Heart right ventricle (tissue), 16 donors: ENCODE measurements at regions of chr11 and their contacts with region 1.

Region 1: GRCh38 chr11:108654994-108655631 is 9.8 kb upstream of the DDX10 start:
- DNase-seq: peak in 1 of 2 donors; percentile 27
- ATAC-seq: peak in 2 of 8 donors; percentile 33 to 52
- H3K4me3 ChIP-seq: no peak overlapping the region
- H3K27ac ChIP-seq: no peak overlapping the region
- H3K4me1 ChIP-seq: no peaks in the 10 kb centered on the region
- H3K27me3 ChIP-seq: peaks cover 0 to 10% (median 0%) of the 10 kb centered on the region in 7 donors
- CTCF ChIP-seq: peak in 8 of 9 donors; percentile 36 to 68 (median 58)

Region 2: GRCh38 chr11:107999759-108000455 is 655.2 kb before region 1 on chr11:
- intact Hi-C with region 1: loop called in 4 of 10 experiments (anchors 5 to 10 kb)
- DNase-seq: no peak
- ATAC-seq: peak in 1 of 8 donors; percentile 68
- H3K4me3 ChIP-seq: no peak overlapping the region
- H3K27ac ChIP-seq: no peak overlapping the region
- H3K4me1 ChIP-seq: no peaks in the 10 kb centered on the region
- H3K27me3 ChIP-seq: peaks cover 0 to 4% (median 0%) of the 10 kb centered on the region in 7 donors
- CTCF ChIP-seq: peak in 7 of 9 donors; percentile 21 to 48 (median 34)

Region 3: DNA sequence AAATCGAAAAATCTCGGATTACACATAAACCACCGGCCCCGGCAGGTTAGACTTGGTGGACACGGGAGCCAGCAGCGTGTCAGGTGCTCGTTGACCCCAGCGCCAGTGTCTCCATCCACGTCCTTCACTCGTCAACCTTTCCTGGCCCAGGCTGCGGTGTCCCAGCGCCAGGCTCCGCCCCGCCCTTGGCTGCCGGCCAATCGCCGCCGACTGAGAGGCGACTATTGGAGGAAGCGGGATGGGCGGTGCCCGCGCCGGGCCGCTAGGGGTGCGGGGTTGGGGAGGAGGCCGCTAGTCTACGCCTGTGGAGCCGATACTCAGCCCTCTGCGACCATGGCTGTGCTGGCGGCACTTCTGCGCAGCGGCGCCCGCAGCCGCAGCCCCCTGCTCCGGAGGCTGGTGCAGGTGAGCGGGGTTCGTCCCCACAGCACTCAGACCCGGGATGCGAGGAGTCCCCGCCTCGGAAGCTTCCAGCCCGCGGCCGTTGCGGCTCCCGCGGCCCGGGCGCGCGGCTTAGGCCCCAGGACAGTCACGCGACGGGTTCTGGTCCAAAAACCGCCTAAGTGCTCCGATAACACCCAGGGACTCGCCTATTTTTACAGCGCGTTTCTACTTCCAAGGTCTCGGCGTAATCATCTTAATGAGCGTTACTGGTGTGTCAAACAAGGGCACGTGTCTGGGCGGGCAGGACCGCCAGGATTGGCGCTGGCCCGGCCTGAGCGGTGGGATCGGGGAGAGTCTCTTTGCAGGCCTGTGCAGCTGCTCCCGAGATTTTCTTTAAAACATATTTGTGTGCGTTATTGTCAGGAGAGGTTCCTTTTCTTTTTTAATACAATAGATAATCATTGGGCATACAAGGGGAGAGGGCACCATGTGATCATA is 533.6 kb before region 1 on chr11 and contains the start of gene ACAT1:
- intact Hi-C with region 1: loop called in 2 of 10 experiments (anchors 5 kb)
- DNase-seq: peak; percentile 98 to 99
- ATAC-seq: peak; percentile 95 to 97 (median 96)
- H3K4me3 ChIP-seq: peak within 1 kb of the TSS; percentile 59 to 90 (median 74)
- H3K27ac ChIP-seq: peak within 1 kb of the TSS; percentile 92 to 99 (median 96)
- H3K4me1 ChIP-seq: peaks cover 9 to 54% (median 38%) of the 10 kb centered on the region in 9 donors
- H3K27me3 ChIP-seq: no peaks in the 10 kb centered on the region
- CTCF ChIP-seq: peak in 8 of 9 donors; percentile 5 to 51 (median 38)
- total RNA-seq, gene ACAT1: 219 to 535 (median 412) TPM

Region 4: DNA sequence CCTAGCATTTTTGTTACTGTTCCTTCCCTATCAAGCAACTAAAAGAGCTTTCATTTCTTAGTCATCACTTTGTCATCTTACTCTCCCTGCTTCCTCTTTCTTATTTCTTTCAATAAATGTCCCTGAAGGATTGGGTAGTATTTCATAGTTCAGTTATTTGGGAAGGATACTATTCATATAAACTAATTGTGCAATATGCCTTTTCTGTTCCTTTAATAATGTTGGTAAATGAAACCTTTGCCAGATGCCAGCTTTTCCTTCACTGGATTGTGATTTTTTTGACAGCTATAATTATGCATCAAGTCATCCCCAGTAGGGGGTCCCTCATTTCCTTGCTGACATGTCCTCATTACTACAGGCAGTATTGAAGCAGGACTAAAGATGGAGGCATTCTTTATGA is 330.5 kb before region 1 on chr11:
- intact Hi-C with region 1: loop called in 1 of 10 experiments (anchors 10 kb)
- DNase-seq: no peak
- ATAC-seq: no peak
- H3K4me3 ChIP-seq: no peak overlapping the region
- H3K27ac ChIP-seq: no peak overlapping the region
- H3K4me1 ChIP-seq: peaks cover 0 to 7% (median 0%) of the 10 kb centered on the region in 9 donors
- H3K27me3 ChIP-seq: no peaks in the 10 kb centered on the region
- CTCF ChIP-seq: no peak

Region 5: DNA sequence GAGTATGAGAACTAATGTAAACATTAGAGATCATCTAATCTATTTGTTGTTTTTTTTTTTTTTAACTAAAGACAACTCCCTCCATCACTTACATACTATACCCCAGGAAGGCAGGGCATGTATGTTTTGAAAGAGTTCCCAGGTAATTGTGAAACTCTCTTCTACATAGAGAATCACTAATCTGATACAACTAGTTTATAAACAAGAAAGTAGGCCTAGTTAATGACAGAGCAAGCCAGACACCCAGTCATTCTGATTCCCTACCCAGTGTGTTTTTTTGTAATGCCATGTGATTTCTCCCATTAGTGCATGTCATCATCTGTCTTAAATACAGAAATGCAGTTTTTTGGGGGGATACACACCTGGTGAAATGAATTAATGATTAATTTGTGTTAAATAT is 308.7 kb before region 1 on chr11:
- intact Hi-C with region 1: loop called in 4 of 10 experiments (anchors 5 to 10 kb)
- DNase-seq: no peak
- ATAC-seq: no peak
- H3K4me3 ChIP-seq: no peak overlapping the region
- H3K27ac ChIP-seq: no peak overlapping the region
- H3K4me1 ChIP-seq: no peaks in the 10 kb centered on the region
- H3K27me3 ChIP-seq: no peaks in the 10 kb centered on the region
- CTCF ChIP-seq: no peak

Region 6: DNA sequence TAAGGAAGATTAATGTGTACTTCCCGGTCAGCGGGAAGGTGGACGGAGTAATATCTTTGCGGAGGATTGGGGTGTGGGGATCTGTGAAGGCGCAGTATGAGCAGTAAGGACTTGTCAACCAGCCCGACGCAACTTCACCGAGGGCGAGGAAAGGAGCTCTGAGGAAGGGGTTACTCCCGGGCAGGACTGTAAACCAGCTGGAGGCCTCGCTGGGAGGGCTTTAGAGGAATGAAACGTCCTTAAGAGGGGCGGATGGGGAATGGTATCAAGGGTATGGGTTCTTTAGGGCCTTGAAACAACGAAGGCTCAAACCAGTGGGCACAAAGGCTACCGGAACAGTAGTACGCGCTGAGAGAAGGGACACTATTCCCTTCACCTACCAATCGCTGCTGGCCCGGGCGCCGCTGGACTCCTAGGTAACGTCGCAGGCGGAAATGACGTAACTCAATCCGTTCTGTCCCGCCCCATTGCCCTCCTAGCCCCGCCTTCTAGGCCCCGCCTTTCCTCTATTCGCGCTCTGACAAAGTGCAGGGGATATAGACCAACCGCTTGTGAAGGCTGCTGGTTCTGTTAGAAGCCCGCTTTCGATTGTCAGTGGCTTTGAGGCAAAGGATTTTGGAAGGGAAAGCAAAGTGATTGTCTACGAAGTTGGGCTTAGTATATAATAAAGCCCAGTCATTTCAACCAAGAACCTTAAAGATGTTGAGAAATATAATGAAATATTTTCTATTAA is 187.9 kb before region 1 on chr11 and contains the start of gene C11orf65:
- intact Hi-C with region 1: loop called in 2 of 10 experiments (anchors 5 to 10 kb)
- DNase-seq: peak; percentile 94 to 97
- ATAC-seq: peak; percentile 99 to 100 (median 100)
- H3K4me3 ChIP-seq: peak within 1 kb of the TSS; percentile 51 to 74 (median 66)
- H3K27ac ChIP-seq: peak within 1 kb of the TSS; percentile 94 to 99 (median 98)
- H3K4me1 ChIP-seq: peaks cover 0 to 22% (median 8%) of the 10 kb centered on the region in 9 donors
- H3K27me3 ChIP-seq: no peaks in the 10 kb centered on the region
- CTCF ChIP-seq: no peak
- total RNA-seq, gene C11orf65: 0.39 to 1.6 (median 1.1) TPM in 9 of 10 donors, not detected in the other

Region 7: GRCh38 chr11:108703916-108704315 is 48.8 kb after region 1 on chr11:
- intact Hi-C with region 1: no loop called
- DNase-seq: no peak
- ATAC-seq: no peak
- H3K4me3 ChIP-seq: no peak overlapping the region
- H3K27ac ChIP-seq: no peak overlapping the region
- H3K4me1 ChIP-seq: no peaks in the 10 kb centered on the region
- H3K27me3 ChIP-seq: no peaks in the 10 kb centered on the region
- CTCF ChIP-seq: no peak